ENCODE measurements at regions of chr9 and their contacts with region 1.

Region 1: GRCh38 chr9:1009101-1009707 is 32.7 kb downstream of the DMRT3 start:
- DNase-seq: peak; percentile 65 to 95
- H3K4me3 ChIP-seq: no peak overlapping the region
- H3K27ac ChIP-seq: no peak overlapping the region
- H3K4me1 ChIP-seq: no peaks in the 10 kb centered on the region; a peak in 1 of 7 replicates
- H3K27me3 ChIP-seq: peaks cover 0 to 2% (median 0%) of the 10 kb centered on the region in 4 experiments; a peak in 2 of 7 replicates
- CTCF ChIP-seq: peak; percentile 94 to 98 (median 96)
- EP300 ChIP-seq: no peak
- POLR2A ChIP-seq: no peak
- RAD21 ChIP-seq: peak; percentile 97 to 99

Region 2: GRCh38 chr9:693201-694091 is 315.8 kb before region 1 on chr9:
- CTCF ChIA-PET with region 1: no interaction called
- POLR2A ChIA-PET with region 1: no interaction called
- DNase-seq: no peak
- H3K4me3 ChIP-seq: no peak overlapping the region
- H3K27ac ChIP-seq: 0 out of 2 replicates have a peak overlapping the region, but pooled peaks have one; percentile 49
- H3K4me1 ChIP-seq: peaks cover 4 to 18% (median 10%) of the 10 kb centered on the region in 4 experiments; a peak in 5 of 7 replicates
- H3K27me3 ChIP-seq: no peaks in the 10 kb centered on the region
- CTCF ChIP-seq: no peak
- EP300 ChIP-seq: no peak
- POLR2A ChIP-seq: no peak
- RAD21 ChIP-seq: no peak

Region 3: GRCh38 chr9:875119-875962 is 133.9 kb before region 1 on chr9:
- CTCF ChIA-PET with region 1: interaction called, 18 read pairs
- POLR2A ChIA-PET with region 1: no interaction called
- DNase-seq: no peak
- H3K4me3 ChIP-seq: no peak overlapping the region
- H3K27ac ChIP-seq: no peak overlapping the region
- H3K4me1 ChIP-seq: no peaks in the 10 kb centered on the region
- H3K27me3 ChIP-seq: no peaks in the 10 kb centered on the region; a peak in 1 of 7 replicates
- CTCF ChIP-seq: no peak
- EP300 ChIP-seq: no peak
- POLR2A ChIP-seq: no peak
- RAD21 ChIP-seq: no peak

Region 4: DNA sequence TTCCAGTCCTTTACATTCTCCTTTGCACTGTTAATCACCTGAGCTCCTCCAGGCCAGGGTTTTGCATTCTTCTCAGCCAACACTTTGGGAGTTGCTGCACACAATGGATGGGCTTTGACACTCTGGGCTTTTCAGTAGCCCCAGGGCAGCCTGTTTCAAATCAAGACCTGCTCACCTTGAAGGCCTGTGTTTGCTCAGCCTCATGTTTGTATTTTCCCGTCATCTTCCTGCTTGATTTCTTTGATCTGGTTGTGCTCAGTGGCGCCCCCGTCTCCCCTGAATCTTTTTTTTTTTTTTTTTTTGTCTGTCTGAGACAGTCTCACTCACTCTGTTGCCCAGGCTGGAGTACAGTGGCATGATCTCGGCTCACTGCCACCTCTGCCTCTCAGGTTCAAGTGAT is 126.7 kb before region 1 on chr9:
- CTCF ChIA-PET with region 1: interaction called, 18 read pairs
- POLR2A ChIA-PET with region 1: no interaction called
- DNase-seq: no peak
- H3K4me3 ChIP-seq: no peak overlapping the region
- H3K27ac ChIP-seq: no peak overlapping the region
- H3K4me1 ChIP-seq: no peaks in the 10 kb centered on the region
- H3K27me3 ChIP-seq: no peaks in the 10 kb centered on the region
- CTCF ChIP-seq: peak in 2 of 3 experiments; percentile 16 to 46; a peak in 2 of 4 replicates
- EP300 ChIP-seq: no peak
- POLR2A ChIP-seq: no peak
- RAD21 ChIP-seq: no peak

Region 5: DNA sequence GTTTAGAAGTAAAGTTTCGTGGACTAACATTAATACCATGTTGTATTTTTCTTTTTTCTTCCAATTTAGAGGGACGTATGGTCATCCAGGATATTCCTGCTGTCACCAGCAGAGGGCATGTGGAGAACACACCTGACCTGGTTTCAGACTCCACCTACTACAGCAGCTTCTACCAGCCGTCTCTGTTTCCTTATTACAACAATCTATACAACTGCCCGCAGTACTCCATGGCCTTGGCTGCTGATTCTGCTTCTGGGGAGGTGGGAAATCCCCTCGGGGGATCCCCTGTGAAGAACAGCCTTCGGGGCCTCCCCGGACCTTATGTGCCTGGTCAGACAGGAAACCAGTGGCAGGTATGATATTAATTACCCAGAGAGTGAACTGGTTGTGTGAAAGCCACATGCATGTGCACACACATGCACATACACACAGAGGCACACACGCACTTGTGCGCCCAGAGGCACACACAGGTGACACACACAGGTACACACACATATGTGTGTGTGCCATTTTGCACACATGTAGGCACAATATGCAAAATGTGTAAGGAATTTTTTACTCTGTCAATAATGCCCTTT is 115.3 kb before region 1 on chr9:
- CTCF ChIA-PET with region 1: interaction called, 57 read pairs
- POLR2A ChIA-PET with region 1: no interaction called
- DNase-seq: peak; percentile 10 to 66
- H3K4me3 ChIP-seq: no peak overlapping the region
- H3K27ac ChIP-seq: no peak overlapping the region
- H3K4me1 ChIP-seq: peaks cover 0 to 12% (median 0%) of the 10 kb centered on the region in 4 experiments; a peak in 1 of 7 replicates
- H3K27me3 ChIP-seq: peaks cover 0 to 9% (median 0%) of the 10 kb centered on the region in 4 experiments; a peak in 2 of 7 replicates
- CTCF ChIP-seq: peak; percentile 67 to 96 (median 86)
- EP300 ChIP-seq: no peak
- POLR2A ChIP-seq: no peak
- RAD21 ChIP-seq: peak; percentile 94 to 96

Region 6: DNA sequence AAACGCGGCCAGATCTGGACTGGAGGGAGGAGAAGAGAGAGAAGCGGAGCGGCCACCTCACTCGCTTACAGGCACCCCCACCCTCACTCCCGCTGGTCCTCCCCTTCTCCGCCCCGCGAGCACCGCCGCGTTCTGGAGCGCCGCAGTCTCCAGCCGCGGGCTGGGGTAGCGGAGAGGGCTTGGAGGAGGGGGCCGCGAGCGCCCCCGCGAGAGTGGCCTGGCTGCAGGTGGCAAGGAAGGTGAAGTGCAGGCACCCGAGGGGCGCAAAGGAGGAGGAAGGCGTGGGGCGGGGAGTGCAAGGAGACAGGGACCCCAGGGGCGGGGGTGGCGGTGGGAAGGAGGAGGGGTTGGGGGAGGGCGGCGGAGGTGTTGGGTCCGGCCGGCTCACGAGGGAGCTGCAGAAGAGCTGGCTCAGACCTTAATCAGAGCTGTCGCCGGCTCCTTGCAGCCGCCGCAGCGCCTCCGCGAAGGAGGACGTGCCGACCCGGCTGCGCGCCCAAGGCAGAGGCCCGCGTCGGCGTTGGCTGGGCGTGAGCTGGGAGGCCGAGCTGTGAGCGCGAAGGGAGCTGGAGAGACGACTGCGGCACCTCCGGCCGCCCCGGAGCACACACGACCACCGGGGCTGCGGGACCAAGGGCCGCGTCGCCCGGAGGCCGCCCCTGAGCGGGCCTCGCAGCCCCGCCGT is 32.8 kb before region 1 on chr9 and contains the start of gene DMRT3:
- CTCF ChIA-PET with region 1: interaction called, 10 read pairs
- POLR2A ChIA-PET with region 1: no interaction called
- DNase-seq: peak in 1 of 2 experiments; percentile 83
- H3K4me3 ChIP-seq: peak within 1 kb of the TSS; percentile 33 to 63 (median 40)
- H3K27ac ChIP-seq: no peak within 1 kb of the TSS
- H3K4me1 ChIP-seq: peaks cover 13 to 36% (median 23%) of the 10 kb centered on the region in 4 experiments
- H3K27me3 ChIP-seq: peaks cover 77 to 96% (median 92%) of the 10 kb centered on the region in 4 experiments
- CTCF ChIP-seq: peak in 1 of 3 experiments; percentile 22; a peak in 1 of 4 replicates
- EP300 ChIP-seq: no peak
- POLR2A ChIP-seq: no peak
- RAD21 ChIP-seq: no peak; a peak in 1 of 4 replicates
- total RNA-seq, gene DMRT3: not detected in 2 replicates

Region 7: GRCh38 chr9:994005-994404 is 15.2 kb before region 1 on chr9:
- CTCF ChIA-PET with region 1: interaction called, 13 read pairs
- POLR2A ChIA-PET with region 1: no interaction called
- DNase-seq: no peak
- H3K4me3 ChIP-seq: no peak overlapping the region
- H3K27ac ChIP-seq: no peak overlapping the region
- H3K4me1 ChIP-seq: no peaks in the 10 kb centered on the region
- H3K27me3 ChIP-seq: no peaks in the 10 kb centered on the region
- CTCF ChIP-seq: no peak
- EP300 ChIP-seq: no peak
- POLR2A ChIP-seq: no peak
- RAD21 ChIP-seq: no peak